Activated T-helper 2 cell treated with anti-CD3 and anti-CD28 coated beads, Interferon-gamma antibody, Interleukin-2, Interleukin-4, amounts not matched to agents 10 μg/mL and 5 μg/mL and 100 μg/mL, durations not matched to agents 14 hours and 24 hours and 36 hours (primary cell): ENCODE measurements at regions of chr10 and their contacts with region 1.

Region 1: GRCh38 chr10:6068422-6068821 is 6.3 kb upstream of the IL2RA start:
- DNase-seq: peak; percentile 45
- H3K4me3 Mint-ChIP-seq: peak overlapping the region; percentile 85
- H3K27ac Mint-ChIP-seq: peak overlapping the region; percentile 99
- H3K4me1 Mint-ChIP-seq: peaks cover 91% of the 10 kb centered on the region
- H3K27me3 Mint-ChIP-seq: no peaks in the 10 kb centered on the region

Region 2: GRCh38 chr10:6083523-6084475 is 15.4 kb after region 1 on chr10:
- intact Hi-C with region 1: loop called (anchors 1 kb)
- DNase-seq: peak; percentile 67
- H3K4me3 Mint-ChIP-seq: peak overlapping the region; percentile 82
- H3K27ac Mint-ChIP-seq: peak overlapping the region; percentile 92
- H3K4me1 Mint-ChIP-seq: peaks cover 73% of the 10 kb centered on the region
- H3K27me3 Mint-ChIP-seq: no peaks in the 10 kb centered on the region

Region 3: GRCh38 chr10:6973899-6974298 is 905.5 kb after region 1 on chr10:
- intact Hi-C with region 1: no loop called
- DNase-seq: peak; percentile 24
- H3K4me3 Mint-ChIP-seq: no peak overlapping the region
- H3K27ac Mint-ChIP-seq: no peak overlapping the region
- H3K4me1 Mint-ChIP-seq: peaks cover 19% of the 10 kb centered on the region
- H3K27me3 Mint-ChIP-seq: peaks cover 25% of the 10 kb centered on the region